ENCODE measurements at regions of chr11 and their contacts with region 1.

Region 1: DNA sequence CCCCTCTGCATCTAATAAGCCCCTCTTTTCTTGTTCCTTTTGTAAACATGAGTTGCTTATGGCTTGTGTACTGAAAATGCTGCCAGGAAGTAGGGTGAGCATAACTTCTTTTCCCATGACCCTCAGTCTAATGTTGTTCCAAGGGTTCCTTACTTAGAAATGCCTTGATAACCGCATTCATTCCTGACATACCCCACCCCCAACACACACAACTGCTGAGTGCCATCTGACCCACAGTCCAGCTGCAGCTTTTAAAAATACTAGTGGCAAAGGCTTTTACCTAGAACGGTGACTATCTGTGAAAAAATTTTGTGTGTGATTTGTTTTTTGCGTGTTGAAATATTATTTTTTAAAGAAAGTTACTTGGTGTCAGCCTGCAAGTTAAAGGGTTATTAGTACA is 52.6 kb downstream of the ARHGAP42 start:
- DNase-seq: peak; percentile 64
- ATAC-seq: peak; percentile 88
- H3K4me3 ChIP-seq: no peak overlapping the region
- H3K27ac ChIP-seq: peak overlapping the region; percentile 49; the same call in 1 of the 2 replicates
- H3K4me1 ChIP-seq: peaks cover 37% of the 10 kb centered on the region
- H3K27me3 ChIP-seq: no peaks in the 10 kb centered on the region
- CTCF ChIP-seq: no peak

Region 2: DNA sequence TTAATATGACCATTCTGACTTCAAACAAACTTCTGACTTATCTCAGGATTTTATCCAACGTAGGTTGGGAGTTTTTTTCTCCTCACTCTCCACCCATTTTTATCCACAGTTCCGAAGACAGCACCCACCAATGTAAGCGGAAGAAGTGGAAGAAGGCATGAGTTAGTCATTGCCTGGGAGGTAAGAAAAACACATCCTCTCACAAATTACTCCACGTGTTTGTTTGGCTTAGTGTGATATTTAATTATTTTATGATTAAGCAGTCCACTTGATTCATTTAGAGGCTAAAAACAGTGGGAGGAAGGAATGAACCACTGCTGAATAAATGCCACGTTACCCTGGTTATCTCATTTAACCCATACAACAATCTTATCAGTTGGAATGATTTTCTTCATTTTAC is 442.1 kb before region 1 on chr11:
- CTCF ChIA-PET with region 1: no interaction called
- POLR2A ChIA-PET with region 1: no interaction called
- in situ Hi-C with region 1: no loop called
- intact Hi-C with region 1: no loop called
- DNase-seq: no peak
- ATAC-seq: no peak
- H3K4me3 ChIP-seq: no peak overlapping the region
- H3K27ac ChIP-seq: no peak overlapping the region
- H3K4me1 ChIP-seq: no peaks in the 10 kb centered on the region
- H3K27me3 ChIP-seq: no peaks in the 10 kb centered on the region
- CTCF ChIP-seq: no peak

Region 3: DNA sequence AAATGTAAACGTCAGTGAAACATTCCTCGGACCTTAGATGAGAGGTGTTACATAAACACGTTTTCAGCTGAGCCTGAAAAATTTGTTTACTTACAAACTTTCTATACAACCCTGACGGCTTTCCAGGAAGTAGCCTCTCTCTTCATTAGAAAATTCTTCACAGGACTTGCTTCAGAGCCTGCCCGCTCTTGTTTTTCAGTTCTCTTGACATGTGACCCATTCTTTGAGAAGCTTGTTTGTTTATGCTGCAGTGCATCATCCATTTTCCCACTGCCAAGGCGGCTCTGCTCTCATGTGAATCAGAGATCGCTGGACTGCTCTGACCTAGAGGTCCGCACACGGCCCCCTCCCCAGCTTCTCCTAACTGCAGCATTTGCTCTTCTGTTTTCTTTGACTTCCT is 100.5 kb before region 1 on chr11:
- CTCF ChIA-PET with region 1: no interaction called
- POLR2A ChIA-PET with region 1: no interaction called
- in situ Hi-C with region 1: no loop called
- intact Hi-C with region 1: no loop called
- DNase-seq: no peak
- ATAC-seq: no peak; the same call in 1 of the 2 replicates
- H3K4me3 ChIP-seq: 0 out of 4 replicates have a peak overlapping the region, but pooled peaks of 1 of the 2 experiments have one; percentile 5
- H3K27ac ChIP-seq: no peak overlapping the region
- H3K4me1 ChIP-seq: no peaks in the 10 kb centered on the region
- H3K27me3 ChIP-seq: no peaks in the 10 kb centered on the region
- CTCF ChIP-seq: no peak

Region 4: GRCh38 chr11:100715165-100715761 is 24.4 kb before region 1 on chr11:
- CTCF ChIA-PET with region 1: no interaction called
- POLR2A ChIA-PET with region 1: interaction called, 11 read pairs
- in situ Hi-C with region 1: no loop called
- intact Hi-C with region 1: no loop called
- DNase-seq: no peak
- ATAC-seq: no peak
- H3K4me3 ChIP-seq: no peak overlapping the region
- H3K27ac ChIP-seq: 0 out of 2 replicates have a peak overlapping the region, but pooled peaks have one; percentile 5
- H3K4me1 ChIP-seq: peaks cover 16% of the 10 kb centered on the region
- H3K27me3 ChIP-seq: no peaks in the 10 kb centered on the region
- CTCF ChIP-seq: no peak

Region 5: DNA sequence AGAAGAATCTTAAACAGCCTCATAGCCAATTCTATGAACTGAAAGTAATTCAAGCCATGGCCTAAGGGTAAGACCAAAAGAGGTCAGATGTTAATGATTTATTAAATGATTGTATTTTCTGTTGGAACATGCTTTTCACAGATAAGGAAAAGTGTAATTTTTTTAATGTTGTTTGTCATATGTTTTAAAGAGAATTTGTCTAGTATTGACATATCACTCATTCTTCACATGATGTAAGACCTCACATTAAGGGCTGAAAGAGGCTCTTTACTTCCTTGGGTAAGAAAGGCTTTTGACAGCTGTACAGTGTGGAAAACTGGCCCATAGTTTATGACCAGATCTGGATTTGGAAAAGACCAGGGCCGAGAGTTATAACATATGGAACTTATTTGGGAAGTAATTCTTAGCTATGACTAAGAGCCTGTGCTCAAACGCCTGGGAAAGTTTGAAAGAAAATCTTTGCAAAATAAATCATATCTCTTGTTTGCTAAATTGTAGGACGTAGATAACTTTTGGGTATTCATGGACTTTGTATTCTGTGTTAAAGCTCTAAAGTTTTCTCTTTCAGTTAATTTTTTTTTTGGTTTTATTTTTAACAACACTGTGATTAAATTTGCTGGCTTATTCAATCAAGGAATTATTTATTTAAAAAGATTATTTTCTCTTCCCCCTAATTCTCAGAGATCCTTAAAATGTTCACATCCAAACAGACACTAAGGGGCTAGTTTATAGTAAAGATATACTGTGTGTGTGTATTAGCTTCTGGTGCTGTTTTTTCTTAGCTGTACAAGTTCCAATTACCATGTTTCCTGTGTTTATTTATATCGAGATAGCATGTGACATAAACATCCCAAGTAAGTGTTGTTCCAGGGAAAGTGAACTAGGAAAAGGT is 109.6 kb after region 1 on chr11:
- CTCF ChIA-PET with region 1: no interaction called
- POLR2A ChIA-PET with region 1: no interaction called
- in situ Hi-C with region 1: no loop called
- intact Hi-C with region 1: no loop called
- DNase-seq: no peak
- ATAC-seq: no peak
- H3K4me3 ChIP-seq: no peak overlapping the region
- H3K27ac ChIP-seq: no peak overlapping the region; the same call in 1 of the 2 replicates
- H3K4me1 ChIP-seq: peaks cover 2% of the 10 kb centered on the region
- H3K27me3 ChIP-seq: no peaks in the 10 kb centered on the region
- CTCF ChIP-seq: no peak

Region 6: GRCh38 chr11:101034076-101034475 is 294.4 kb after region 1 on chr11:
- CTCF ChIA-PET with region 1: no interaction called
- POLR2A ChIA-PET with region 1: no interaction called
- in situ Hi-C with region 1: no loop called
- intact Hi-C with region 1: no loop called
- DNase-seq: no peak
- ATAC-seq: no peak
- H3K4me3 ChIP-seq: no peak overlapping the region
- H3K27ac ChIP-seq: no peak overlapping the region
- H3K4me1 ChIP-seq: no peaks in the 10 kb centered on the region
- H3K27me3 ChIP-seq: no peaks in the 10 kb centered on the region
- CTCF ChIP-seq: no peak